CD8-positive, alpha-beta T cell (primary cell): ENCODE measurements at regions of chr14 and their contacts with region 1.

Region 1: GRCh38 chr14:91796617-91797347 is 64.9 kb upstream of the CATSPERB start:
- DNase-seq: no peak
- ATAC-seq: no peak
- H3K4me3 ChIP-seq: no peak overlapping the region
- H3K4me3 Mint-ChIP-seq: no peak overlapping the region
- H3K27ac ChIP-seq: no peak overlapping the region
- H3K27ac Mint-ChIP-seq: peak overlapping the region; percentile 80
- H3K4me1 ChIP-seq: no peaks in the 10 kb centered on the region
- H3K4me1 Mint-ChIP-seq: peaks cover 33% of the 10 kb centered on the region
- H3K27me3 ChIP-seq: no peaks in the 10 kb centered on the region
- H3K27me3 Mint-ChIP-seq: no peaks in the 10 kb centered on the region
- CTCF ChIP-seq: no peak

Region 2: GRCh38 chr14:91388551-91388975 is 408.2 kb before region 1 on chr14:
- CTCF ChIA-PET with region 1: no interaction called
- POLR2A ChIA-PET with region 1: no interaction called
- intact Hi-C with region 1: no loop called
- DNase-seq: peak in 5 of 9 experiments; percentile 56 to 81 (median 64)
- ATAC-seq: peak; percentile 68
- H3K4me3 ChIP-seq: peak overlapping the region in 1 of 2 experiments; percentile 37
- H3K4me3 Mint-ChIP-seq: peak overlapping the region; percentile 53
- H3K27ac ChIP-seq: peak overlapping the region in 1 of 2 experiments; percentile 76
- H3K27ac Mint-ChIP-seq: peak overlapping the region; percentile 87
- H3K4me1 ChIP-seq: peaks cover 91% of the 10 kb centered on the region
- H3K4me1 Mint-ChIP-seq: peaks cover 87% of the 10 kb centered on the region
- H3K27me3 ChIP-seq: no peaks in the 10 kb centered on the region
- H3K27me3 Mint-ChIP-seq: no peaks in the 10 kb centered on the region
- CTCF ChIP-seq: no peak

Region 3: GRCh38 chr14:91466192-91466591 is 330.6 kb before region 1 on chr14:
- CTCF ChIA-PET with region 1: no interaction called
- POLR2A ChIA-PET with region 1: no interaction called
- intact Hi-C with region 1: loop called in 1 of 2 experiments (anchors 5 kb)
- DNase-seq: no peak
- ATAC-seq: no peak
- H3K4me3 ChIP-seq: no peak overlapping the region
- H3K4me3 Mint-ChIP-seq: no peak overlapping the region
- H3K27ac ChIP-seq: no peak overlapping the region
- H3K27ac Mint-ChIP-seq: peak overlapping the region; percentile 19
- H3K4me1 ChIP-seq: no peaks in the 10 kb centered on the region
- H3K4me1 Mint-ChIP-seq: peaks cover 22% of the 10 kb centered on the region
- H3K27me3 ChIP-seq: no peaks in the 10 kb centered on the region
- H3K27me3 Mint-ChIP-seq: no peaks in the 10 kb centered on the region
- CTCF ChIP-seq: no peak